ENCODE measurements at regions of chr4 and their contacts with region 1.

Region 1: DNA sequence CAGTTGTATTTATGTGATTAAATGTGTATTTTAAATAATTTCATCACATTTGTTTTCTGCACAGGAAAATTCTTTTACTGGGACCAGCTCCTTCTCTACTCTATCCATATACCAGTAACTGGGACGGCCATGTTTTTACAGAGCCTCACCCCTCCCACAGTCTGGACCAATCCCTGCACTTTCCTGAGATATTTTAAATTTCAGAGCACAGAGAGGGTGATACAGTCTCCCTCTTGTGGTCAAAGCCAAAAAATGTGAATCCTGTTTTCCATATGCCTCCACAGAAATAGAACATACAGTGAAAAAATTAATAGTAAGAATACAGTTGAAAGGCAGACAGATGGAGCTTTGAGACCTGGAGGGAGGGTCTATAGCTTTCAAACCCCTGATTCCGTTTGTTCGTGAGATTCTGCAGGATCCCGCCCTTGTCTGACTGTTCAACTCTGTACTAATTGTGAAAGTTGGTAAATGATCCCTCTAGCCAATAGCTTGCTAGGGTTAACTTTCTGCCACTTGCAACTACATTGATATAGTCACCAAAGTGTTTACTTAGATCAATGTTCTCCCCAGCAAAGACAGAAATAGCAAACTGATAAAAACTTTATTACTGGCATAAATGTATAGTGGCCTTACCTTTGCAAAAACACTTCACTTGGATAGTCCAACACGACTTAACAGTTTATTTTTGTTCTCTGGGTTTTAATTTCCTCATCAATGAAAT is 172.2 kb downstream of the PPARGC1A start:
- DNase-seq: peak; percentile 36

Region 2: DNA sequence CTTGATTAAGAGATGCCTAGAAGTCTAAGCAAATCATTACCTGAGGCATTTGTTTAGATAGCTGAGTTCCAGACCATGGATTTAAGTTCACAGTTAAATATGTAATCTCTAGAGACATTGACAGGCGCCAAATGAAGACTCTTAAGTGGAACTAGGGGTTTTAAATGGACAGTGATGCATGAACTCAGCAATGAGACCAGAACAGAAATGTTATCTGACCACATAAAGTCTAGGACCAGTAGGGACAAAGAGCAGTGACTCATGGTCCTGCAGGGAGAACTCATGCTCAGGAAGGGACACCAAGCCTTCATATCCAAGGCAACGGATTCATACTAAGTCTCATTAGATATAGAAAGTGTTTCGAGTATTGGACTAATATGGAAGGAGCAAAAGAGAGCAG is 19.9 kb after region 1 on chr4:
- CTCF ChIA-PET with region 1: no interaction called
- POLR2A ChIA-PET with region 1: no interaction called
- DNase-seq: no peak

Region 3: GRCh38 chr4:23789766-23790165 is 72.1 kb after region 1 on chr4:
- CTCF ChIA-PET with region 1: interaction called, 10 read pairs
- POLR2A ChIA-PET with region 1: no interaction called
- DNase-seq: no peak